ENCODE measurements at regions of chr17 and their contacts with region 1.

Region 1: DNA sequence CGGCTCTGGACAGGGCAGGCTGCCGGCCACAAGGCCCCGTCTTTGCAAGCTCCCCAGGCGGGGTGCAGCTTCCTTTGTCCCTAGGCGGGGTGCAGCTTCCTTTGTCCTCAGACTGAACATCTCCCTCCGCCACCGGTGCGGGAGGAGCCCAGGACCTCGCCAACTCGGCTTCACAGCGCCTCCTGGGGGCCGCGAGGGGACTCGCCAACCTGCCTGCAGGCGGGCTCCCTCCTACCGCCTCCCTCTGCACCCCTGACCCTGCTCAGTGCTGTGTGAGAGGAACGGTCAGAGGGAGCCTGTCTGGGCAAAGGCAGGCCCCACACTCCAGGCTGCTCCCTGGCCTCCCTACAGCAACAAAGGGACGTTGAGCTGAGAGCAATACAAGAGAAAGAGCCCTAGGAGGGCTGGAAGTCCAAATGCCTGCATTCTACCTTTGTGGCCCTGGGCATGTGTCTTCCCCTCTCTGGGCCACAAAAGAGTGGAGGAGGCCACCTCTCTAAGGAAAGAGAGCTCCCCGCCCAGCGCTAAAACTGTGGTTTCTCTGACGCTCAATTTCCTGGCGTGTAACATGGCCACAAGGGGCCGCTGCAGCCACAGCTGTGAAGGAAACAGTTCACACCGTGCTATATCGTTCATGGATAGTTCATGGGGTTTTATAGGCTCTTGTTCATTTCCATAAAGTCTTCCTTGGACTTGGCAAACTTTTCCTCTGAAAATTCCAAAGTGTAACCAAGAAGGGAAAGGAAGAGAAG is 20.9 kb upstream of the KRT19 start:
- DNase-seq: peak; percentile 91
- ATAC-seq: peak; percentile 59
- H3K4me3 ChIP-seq: peak overlapping the region; percentile 50; the same call in 1 of the 2 replicates
- H3K27ac ChIP-seq: peak overlapping the region; percentile 98
- H3K4me1 ChIP-seq: peaks cover 50% of the 10 kb centered on the region
- H3K27me3 ChIP-seq: no peaks in the 10 kb centered on the region
- CTCF ChIP-seq: peak; percentile 81

Region 2: GRCh38 chr17:40803617-40804082 is 745.4 kb before region 1 on chr17:
- CTCF ChIA-PET with region 1: interaction called, 5 read pairs
- POLR2A ChIA-PET with region 1: no interaction called
- intact Hi-C with region 1: loop called (anchors 10 kb)
- DNase-seq: peak; percentile 82
- ATAC-seq: peak; percentile 85
- H3K4me3 ChIP-seq: no peak overlapping the region
- H3K27ac ChIP-seq: peak overlapping the region; percentile 31; the same call in 1 of the 2 replicates
- H3K4me1 ChIP-seq: peaks cover 8% of the 10 kb centered on the region
- H3K27me3 ChIP-seq: no peaks in the 10 kb centered on the region
- CTCF ChIP-seq: peak; percentile 86

Region 3: GRCh38 chr17:40854159-40854814 is 694.7 kb before region 1 on chr17:
- CTCF ChIA-PET with region 1: interaction called, 8 read pairs
- POLR2A ChIA-PET with region 1: interaction called, 3 read pairs
- intact Hi-C with region 1: loop called (anchors 1 kb)
- DNase-seq: peak; percentile 84
- ATAC-seq: peak; percentile 81
- H3K4me3 ChIP-seq: no peak overlapping the region
- H3K27ac ChIP-seq: peak overlapping the region; percentile 64
- H3K4me1 ChIP-seq: peaks cover 51% of the 10 kb centered on the region
- H3K27me3 ChIP-seq: no peaks in the 10 kb centered on the region
- CTCF ChIP-seq: no peak

Region 4: GRCh38 chr17:41322094-41322902 is 226.7 kb before region 1 on chr17:
- CTCF ChIA-PET with region 1: interaction called, 6 read pairs
- POLR2A ChIA-PET with region 1: no interaction called
- intact Hi-C with region 1: loop called (anchors 5 kb)
- DNase-seq: peak; percentile 65
- ATAC-seq: peak; percentile 68; the same call in 1 of the 2 replicates
- H3K4me3 ChIP-seq: no peak overlapping the region
- H3K27ac ChIP-seq: no peak overlapping the region
- H3K4me1 ChIP-seq: no peaks in the 10 kb centered on the region
- H3K27me3 ChIP-seq: no peaks in the 10 kb centered on the region
- CTCF ChIP-seq: peak; percentile 69

Region 5: DNA sequence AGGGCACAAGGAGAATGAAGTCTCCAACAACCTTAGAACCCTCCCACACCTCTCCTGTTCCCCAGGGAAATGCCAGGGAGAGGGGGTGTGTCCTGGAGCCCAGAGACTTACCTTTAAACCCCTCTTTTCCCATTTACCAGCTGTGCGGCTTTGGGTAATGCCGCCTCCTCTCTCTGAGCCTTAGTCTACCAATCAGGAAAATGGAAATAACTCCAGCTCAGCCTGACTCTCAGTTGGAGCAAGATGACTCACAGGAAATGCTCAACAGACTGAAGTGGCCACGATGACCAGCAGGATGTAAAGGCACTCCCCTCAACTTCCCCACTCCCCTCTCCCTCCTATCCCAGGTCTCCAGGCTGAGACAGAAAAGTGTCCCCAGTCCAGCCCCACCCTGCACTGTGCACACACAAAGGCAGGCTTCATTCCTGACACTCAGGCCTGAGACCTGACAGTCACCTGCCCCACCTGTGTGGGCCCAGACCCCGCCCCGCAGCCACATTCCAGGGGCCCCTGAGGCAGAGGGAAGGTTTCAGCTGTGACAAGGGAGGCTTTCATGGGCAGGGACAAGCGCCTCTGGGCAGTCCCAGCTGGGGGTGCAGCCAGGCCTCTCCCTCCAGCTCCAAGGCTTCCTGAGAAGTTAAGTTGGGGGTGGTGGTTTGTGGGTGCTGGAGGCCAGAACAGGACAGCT is 27.3 kb before region 1 on chr17:
- CTCF ChIA-PET with region 1: interaction called, 30 read pairs
- POLR2A ChIA-PET with region 1: interaction called, 30 read pairs
- intact Hi-C with region 1: loop called (anchors 1 kb)
- DNase-seq: peak; percentile 95
- ATAC-seq: peak; percentile 60
- H3K4me3 ChIP-seq: peak overlapping the region; percentile 42; the same call in 1 of the 2 replicates
- H3K27ac ChIP-seq: peak overlapping the region; percentile 97
- H3K4me1 ChIP-seq: peaks cover 76% of the 10 kb centered on the region
- H3K27me3 ChIP-seq: no peaks in the 10 kb centered on the region
- CTCF ChIP-seq: no peak

Region 6: GRCh38 chr17:41530062-41531051 is 18.7 kb before region 1 on chr17:
- CTCF ChIA-PET with region 1: interaction called, 22 read pairs
- POLR2A ChIA-PET with region 1: interaction called, 23 read pairs
- intact Hi-C with region 1: loop called (anchors 1 kb)
- DNase-seq: peak; percentile 94
- ATAC-seq: peak; percentile 62
- H3K4me3 ChIP-seq: peak overlapping the region; percentile 90; the same call in 1 of the 2 replicates
- H3K27ac ChIP-seq: peak overlapping the region; percentile 97
- H3K4me1 ChIP-seq: peaks cover 32% of the 10 kb centered on the region
- H3K27me3 ChIP-seq: no peaks in the 10 kb centered on the region
- CTCF ChIP-seq: no peak

Region 7: GRCh38 chr17:41648411-41649195 is 99.6 kb after region 1 on chr17:
- CTCF ChIA-PET with region 1: interaction called, 22 read pairs
- POLR2A ChIA-PET with region 1: interaction called, 3 read pairs
- intact Hi-C with region 1: loop called (anchors 1 kb)
- DNase-seq: peak; percentile 78
- ATAC-seq: peak; percentile 86
- H3K4me3 ChIP-seq: peak overlapping the region; percentile 72
- H3K27ac ChIP-seq: peak overlapping the region; percentile 65
- H3K4me1 ChIP-seq: peaks cover 11% of the 10 kb centered on the region
- H3K27me3 ChIP-seq: no peaks in the 10 kb centered on the region
- CTCF ChIP-seq: peak; percentile 81

Measured in PC-3 (cell line).